ENCODE measurements at regions of chr20 and their contacts with region 1.

Region 1: DNA sequence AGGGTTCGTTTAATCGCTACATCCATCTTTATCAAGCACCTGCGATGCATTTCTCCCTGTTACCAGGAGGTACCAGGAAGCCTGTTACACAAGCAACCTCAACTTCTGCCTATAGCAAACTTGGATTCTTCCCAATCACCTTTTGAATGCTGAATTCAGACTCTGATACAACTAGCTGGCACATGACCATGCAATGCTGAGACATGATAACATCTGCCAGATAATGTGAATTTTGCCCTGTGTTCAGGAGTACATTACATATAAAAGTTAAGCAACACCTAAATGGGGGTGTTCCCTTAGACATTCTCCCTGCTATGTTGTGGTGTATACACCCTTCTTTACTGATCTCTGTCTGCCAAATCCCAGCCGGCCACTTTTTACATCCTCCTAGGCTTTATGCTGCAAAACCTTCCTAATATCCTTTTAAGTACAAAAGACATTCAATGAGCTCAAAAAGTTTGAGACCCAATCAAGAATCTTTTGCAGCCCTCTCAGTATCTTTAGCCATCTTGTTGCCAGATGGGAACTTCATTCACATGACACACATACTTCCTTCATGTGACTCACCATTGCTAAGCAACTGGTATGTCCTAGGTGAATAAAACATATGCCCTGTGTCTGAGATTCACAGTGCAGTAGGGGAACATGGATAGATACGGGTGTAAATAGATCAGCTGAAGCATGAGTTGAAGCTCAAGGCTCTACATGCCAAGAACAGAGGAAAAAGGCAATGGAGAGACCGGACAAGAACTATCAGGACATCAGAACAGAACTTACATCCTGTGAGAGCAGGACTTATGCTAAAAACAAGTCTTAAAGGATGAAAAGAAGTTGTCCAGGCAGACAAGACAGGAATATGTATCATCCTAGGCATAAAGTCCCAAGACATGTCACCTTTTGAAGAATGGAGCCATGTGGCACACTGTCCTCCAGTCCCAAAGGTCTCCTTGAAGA is 84.3 kb downstream of the ZHX3 start:
- DNase-seq: peak; percentile 10 to 31
- ATAC-seq: peak; percentile 71 to 86; a peak in 5 of 6 replicates
- H3K4me3 ChIP-seq: peak overlapping the region; percentile 42
- H3K27ac ChIP-seq: peak overlapping the region; percentile 56 to 64; a peak in 3 of 6 replicates
- H3K4me1 ChIP-seq: peaks cover 12% of the 10 kb centered on the region
- CTCF ChIP-seq: no peak
- EP300 ChIP-seq: no peak
- POLR2A ChIP-seq: no peak
- RAD21 ChIP-seq: no peak

Region 2: GRCh38 chr20:41218466-41218865 is 14.8 kb before region 1 on chr20:
- CTCF ChIA-PET with region 1: interaction called, 26 read pairs
- POLR2A ChIA-PET with region 1: interaction called, 3 read pairs
- DNase-seq: no peak
- ATAC-seq: no peak
- H3K4me3 ChIP-seq: no peak overlapping the region
- H3K27ac ChIP-seq: no peak overlapping the region
- H3K4me1 ChIP-seq: no peaks in the 10 kb centered on the region
- CTCF ChIP-seq: no peak
- EP300 ChIP-seq: no peak
- POLR2A ChIP-seq: no peak
- RAD21 ChIP-seq: no peak

Region 3: GRCh38 chr20:41275301-41275731 is 42.1 kb after region 1 on chr20:
- CTCF ChIA-PET with region 1: no interaction called
- POLR2A ChIA-PET with region 1: no interaction called
- DNase-seq: no peak
- ATAC-seq: no peak
- H3K4me3 ChIP-seq: no peak overlapping the region
- H3K27ac ChIP-seq: no peak overlapping the region
- H3K4me1 ChIP-seq: 0 out of 3 replicates have a peak, but pooled peaks cover 7% of the 10 kb centered on the region
- CTCF ChIP-seq: no peak
- EP300 ChIP-seq: no peak
- POLR2A ChIP-seq: no peak
- RAD21 ChIP-seq: no peak

Region 4: DNA sequence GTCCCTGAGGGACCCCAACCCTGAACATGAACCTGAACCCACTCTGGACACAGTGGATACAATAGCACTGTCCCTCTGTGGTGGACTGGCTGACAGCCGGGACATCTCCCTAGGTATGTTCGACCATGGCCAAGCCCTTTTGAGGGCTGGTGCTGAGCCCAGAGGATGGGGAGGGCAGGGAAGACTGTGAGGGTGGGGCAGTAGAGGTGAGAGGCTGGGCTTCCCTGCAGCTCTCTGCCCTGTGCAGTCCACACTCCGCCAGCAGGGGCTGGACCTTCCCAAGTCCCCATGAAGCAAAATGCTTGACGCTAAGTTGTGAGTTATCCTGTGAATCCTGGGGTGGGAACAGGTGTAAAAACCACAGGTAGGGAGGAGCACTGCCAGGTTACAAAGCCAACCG is 118.9 kb after region 1 on chr20:
- CTCF ChIA-PET with region 1: no interaction called
- POLR2A ChIA-PET with region 1: no interaction called
- DNase-seq: peak; percentile 22 to 36
- ATAC-seq: peak; percentile 65 to 81; a peak in 5 of 6 replicates
- H3K4me3 ChIP-seq: no peak overlapping the region
- H3K27ac ChIP-seq: no peak overlapping the region
- H3K4me1 ChIP-seq: no peaks in the 10 kb centered on the region
- CTCF ChIP-seq: no peak
- EP300 ChIP-seq: no peak
- POLR2A ChIP-seq: no peak
- RAD21 ChIP-seq: no peak

Region 5: GRCh38 chr20:41476013-41476752 is 242.9 kb after region 1 on chr20:
- CTCF ChIA-PET with region 1: no interaction called
- POLR2A ChIA-PET with region 1: no interaction called
- DNase-seq: peak in 1 of 2 experiments; percentile 42
- ATAC-seq: no peak
- H3K4me3 ChIP-seq: no peak overlapping the region
- H3K27ac ChIP-seq: peak overlapping the region in 1 of 2 experiments; percentile 48; a peak in 3 of 6 replicates
- H3K4me1 ChIP-seq: peaks cover 23% of the 10 kb centered on the region
- CTCF ChIP-seq: no peak
- EP300 ChIP-seq: no peak
- POLR2A ChIP-seq: no peak
- RAD21 ChIP-seq: no peak

Measured in A549 (cell line).